ENCODE measurements at regions of chr16 and their contacts with region 1.

Region 1: DNA sequence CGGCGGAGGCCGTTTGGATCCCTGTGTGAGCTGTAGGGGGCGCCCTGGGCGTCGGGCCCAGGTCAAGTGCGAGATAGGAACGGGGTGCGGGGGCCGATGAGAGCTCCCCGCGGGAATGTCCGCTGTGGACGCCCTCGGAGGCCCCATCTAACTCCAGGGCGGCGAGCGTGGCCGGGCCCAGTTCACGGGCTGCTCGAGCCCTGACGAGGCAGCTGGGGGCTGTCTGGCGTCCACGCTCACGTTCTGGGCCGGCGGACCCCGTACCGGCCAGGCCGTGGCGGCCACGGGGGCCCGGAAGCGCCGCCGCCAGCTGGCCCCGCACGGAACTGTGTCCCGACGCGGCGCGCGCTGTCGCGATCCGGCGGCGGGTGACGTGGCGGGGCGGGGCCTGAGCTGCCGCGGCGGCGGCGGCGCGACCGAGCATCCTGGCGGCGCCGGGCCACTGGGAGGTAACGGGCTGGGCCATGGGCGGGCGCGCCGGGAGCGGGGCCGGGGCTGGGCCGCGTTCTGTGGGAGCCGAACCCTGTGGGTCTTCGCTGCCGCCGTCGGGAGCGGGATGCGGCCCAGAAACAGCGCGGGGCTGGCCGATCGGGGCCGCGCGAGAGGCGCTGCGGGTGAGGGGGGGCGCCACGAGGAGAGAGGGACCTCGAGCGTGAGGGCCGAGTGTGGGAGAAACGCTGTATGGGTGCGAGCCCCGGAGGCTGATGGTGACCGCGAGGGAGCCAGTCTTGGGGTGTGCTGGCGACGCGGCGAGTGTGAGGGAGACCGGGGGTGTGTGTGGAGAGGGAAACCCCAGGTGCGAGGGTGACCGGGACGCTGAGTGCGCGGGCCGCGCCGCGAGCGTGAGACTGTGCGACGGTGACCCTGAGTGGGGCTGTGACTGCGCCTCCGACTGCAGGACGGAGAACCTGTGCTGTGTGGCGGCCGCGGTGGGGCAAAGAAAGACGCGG is at the start of gene SLC7A6:
- DNase-seq: peak; percentile 88
- H3K4me3 Mint-ChIP-seq: peak within 1 kb of the TSS; percentile 85
- H3K27ac Mint-ChIP-seq: peak within 1 kb of the TSS; percentile 98
- H3K4me1 Mint-ChIP-seq: peaks cover 46% of the 10 kb centered on the region
- H3K27me3 Mint-ChIP-seq: no peaks in the 10 kb centered on the region
- total RNA-seq, gene SLC7A6: 79.4 to 83.4 TPM

Region 2: GRCh38 chr16:68237243-68238028 is 27.0 kb before region 1 on chr16:
- CTCF ChIA-PET with region 1: interaction called, 6 read pairs
- intact Hi-C with region 1: loop called (anchors 1 kb)
- DNase-seq: peak; percentile 95
- H3K4me3 Mint-ChIP-seq: peak overlapping the region; percentile 93
- H3K27ac Mint-ChIP-seq: peak overlapping the region; percentile 79
- H3K4me1 Mint-ChIP-seq: peaks cover 30% of the 10 kb centered on the region
- H3K27me3 Mint-ChIP-seq: no peaks in the 10 kb centered on the region

Region 3: DNA sequence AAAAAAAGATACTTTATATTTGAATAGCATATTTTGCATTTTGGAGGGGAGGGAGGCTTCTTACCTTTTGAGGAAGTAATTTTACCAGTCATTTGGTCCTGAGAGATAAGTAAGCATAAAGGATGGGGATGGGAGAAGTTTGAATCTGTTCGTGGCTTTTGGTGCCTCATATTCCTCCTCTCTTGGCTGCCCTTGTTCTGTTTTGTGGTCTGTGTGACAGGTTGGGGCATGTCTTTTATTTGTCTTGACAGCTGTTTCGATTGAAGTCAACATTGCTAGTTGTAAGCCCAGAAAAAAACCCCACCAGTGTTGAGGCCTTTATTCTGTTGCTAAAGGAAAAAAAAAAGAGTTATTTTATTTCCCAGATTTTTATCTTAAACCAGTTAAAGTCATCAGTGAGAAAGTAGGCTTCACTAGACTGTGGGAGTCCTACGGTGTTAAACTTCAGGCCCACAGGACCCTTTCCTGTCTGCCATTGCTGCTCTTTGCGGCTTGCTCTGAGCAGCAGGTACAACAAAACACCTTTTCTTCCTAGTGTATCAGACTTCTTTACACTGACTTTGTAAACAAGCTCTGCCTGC is 11.3 kb after region 1 on chr16:
- CTCF ChIA-PET with region 1: interaction called, 41 read pairs
- intact Hi-C with region 1: loop called (anchors 1 kb)
- DNase-seq: peak; percentile 78
- H3K4me3 Mint-ChIP-seq: peak overlapping the region; percentile 52
- H3K27ac Mint-ChIP-seq: peak overlapping the region; percentile 99
- H3K4me1 Mint-ChIP-seq: peaks cover 74% of the 10 kb centered on the region
- H3K27me3 Mint-ChIP-seq: no peaks in the 10 kb centered on the region

Region 4: GRCh38 chr16:68289621-68290329 is 25.4 kb after region 1 on chr16:
- CTCF ChIA-PET with region 1: interaction called, 181 read pairs
- intact Hi-C with region 1: loop called (anchors 1 kb)
- DNase-seq: peak; percentile 81
- H3K4me3 Mint-ChIP-seq: no peak overlapping the region
- H3K27ac Mint-ChIP-seq: peak overlapping the region; percentile 92
- H3K4me1 Mint-ChIP-seq: peaks cover 87% of the 10 kb centered on the region
- H3K27me3 Mint-ChIP-seq: no peaks in the 10 kb centered on the region

Region 5: DNA sequence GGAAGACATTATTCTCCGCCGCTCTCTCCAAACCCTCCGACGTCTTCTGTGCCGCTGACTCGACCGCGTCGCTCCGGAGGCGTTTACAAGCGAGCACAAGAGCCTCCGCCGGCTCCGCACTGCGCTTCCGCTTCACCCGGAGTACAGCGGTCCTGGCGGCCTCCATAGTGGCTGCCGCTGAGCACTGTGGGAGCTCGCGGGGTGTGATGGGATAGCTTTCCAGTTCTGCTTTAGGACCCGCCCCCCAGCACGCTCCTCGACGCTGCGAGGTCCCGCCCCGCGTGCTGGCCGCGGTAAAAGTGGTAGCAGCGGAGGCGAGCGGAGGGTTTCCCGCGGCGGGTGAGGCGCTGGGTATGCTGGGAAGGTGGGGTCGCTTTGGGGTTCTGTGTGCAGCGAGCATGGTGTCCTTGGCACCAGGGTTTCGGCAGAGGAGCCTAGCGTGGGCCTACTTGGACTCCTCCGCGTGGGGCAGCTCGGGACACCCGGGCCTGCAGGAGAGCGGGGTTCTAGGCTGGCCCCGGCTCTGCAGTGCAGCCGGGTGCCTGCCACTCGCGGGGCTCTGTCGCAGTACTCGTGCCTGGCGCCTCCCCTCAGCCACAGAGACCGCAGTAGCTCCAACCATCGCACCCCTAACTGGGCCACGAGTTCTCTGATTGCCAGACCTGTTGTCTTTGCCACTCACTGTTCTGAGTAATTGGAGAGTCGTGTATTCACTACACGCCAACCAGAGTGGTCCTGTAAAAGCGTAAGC is 46.5 kb after region 1 on chr16 and contains the starts of genes PRMT7 and SLC7A6OS:
- CTCF ChIA-PET with region 1: interaction called, 459 read pairs
- intact Hi-C with region 1: loop called (anchors 1 kb)
- DNase-seq: peak; percentile 96
- H3K4me3 Mint-ChIP-seq: peak within 1 kb of the TSS; percentile 94
- H3K27ac Mint-ChIP-seq: peak within 1 kb of the TSS; percentile 89
- H3K4me1 Mint-ChIP-seq: peaks cover 46% of the 10 kb centered on the region
- H3K27me3 Mint-ChIP-seq: no peaks in the 10 kb centered on the region
- total RNA-seq, gene PRMT7: 51.6 to 52.4 TPM
- total RNA-seq, gene SLC7A6OS: 23.0 to 26.4 TPM

Region 6: GRCh38 chr16:68356249-68356918 is 92.0 kb after region 1 on chr16:
- CTCF ChIA-PET with region 1: interaction called, 18 read pairs
- intact Hi-C with region 1: loop called (anchors 1 kb)
- DNase-seq: peak; percentile 86
- H3K4me3 Mint-ChIP-seq: no peak overlapping the region
- H3K27ac Mint-ChIP-seq: peak overlapping the region; percentile 56
- H3K4me1 Mint-ChIP-seq: peaks cover 28% of the 10 kb centered on the region
- H3K27me3 Mint-ChIP-seq: no peaks in the 10 kb centered on the region

Region 7: DNA sequence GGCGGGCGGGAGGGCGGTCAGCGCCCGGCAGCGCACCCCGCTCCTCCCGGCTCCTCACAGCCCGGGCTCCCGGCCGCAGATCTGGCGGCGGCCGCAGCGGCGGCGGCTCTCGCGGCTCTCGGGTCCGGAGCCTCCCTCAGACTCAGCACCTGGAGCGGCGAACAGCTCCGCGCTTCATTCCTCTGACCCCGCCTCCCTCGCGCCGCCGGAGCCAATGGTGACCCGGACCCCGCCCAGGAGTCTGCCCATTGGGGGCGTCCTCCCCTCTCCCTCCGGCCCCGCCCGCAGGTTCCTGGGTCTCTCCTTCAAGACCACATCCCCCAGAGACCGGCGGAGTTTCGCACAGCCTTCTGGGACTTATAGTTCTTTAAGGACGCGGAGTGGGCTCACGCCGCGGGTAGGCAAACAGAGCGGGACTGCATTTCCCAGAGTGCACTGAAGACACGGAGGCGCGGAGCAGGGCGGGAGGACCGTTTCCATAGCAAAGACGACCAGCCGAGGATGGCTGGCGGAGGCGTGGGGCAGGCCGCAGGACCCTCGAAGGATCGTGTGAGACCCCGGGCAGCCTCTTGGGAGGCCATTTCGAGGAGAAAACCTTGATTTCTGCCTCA is 184.1 kb after region 1 on chr16 and contains the start of gene SMPD3:
- CTCF ChIA-PET with region 1: interaction called, 4 read pairs
- intact Hi-C with region 1: loop called (anchors 1 kb)
- DNase-seq: peak; percentile 98
- H3K4me3 Mint-ChIP-seq: peak within 1 kb of the TSS; percentile 72
- H3K27ac Mint-ChIP-seq: no peak within 1 kb of the TSS
- H3K4me1 Mint-ChIP-seq: peaks cover 20% of the 10 kb centered on the region
- H3K27me3 Mint-ChIP-seq: peaks cover 16% of the 10 kb centered on the region
- total RNA-seq, gene SMPD3: 0.40 to 0.67 TPM

Measured in activated naive CD4-positive, alpha-beta T cell treated with anti-CD3 and anti-CD28 coated beads for 36 hours (primary cell).